ENCODE measurements at regions of chr22 and their contacts with region 1.

Region 1: GRCh38 chr22:35350539-35351503 is 30.1 kb upstream of the HMOX1 start:
- DNase-seq: peak; percentile 88 to 95 (median 91)
- ATAC-seq: peak; percentile 91 to 94 (median 93)
- H3K4me3 ChIP-seq: peak overlapping the region; percentile 10 to 60 (median 20)
- H3K27ac ChIP-seq: peak overlapping the region in 2 of 4 donors; percentile 44 to 50
- H3K4me1 ChIP-seq: peaks cover 0 to 12% (median 8%) of the 10 kb centered on the region in 3 donors
- H3K27me3 ChIP-seq: no peaks in the 10 kb centered on the region
- CTCF ChIP-seq: peak; percentile 85 to 92 (median 87)

Region 2: GRCh38 chr22:35582861-35583670 is 232.2 kb after region 1 on chr22:
- intact Hi-C with region 1: loop called in 2 of 3 experiments (anchors 5 to 10 kb)
- DNase-seq: peak in 4 of 6 donors; percentile 45 to 73 (median 54)
- ATAC-seq: peak; percentile 81 to 95 (median 90)
- H3K4me3 ChIP-seq: no peak overlapping the region
- H3K27ac ChIP-seq: no peak overlapping the region
- H3K4me1 ChIP-seq: no peaks in the 10 kb centered on the region
- H3K27me3 ChIP-seq: no peaks in the 10 kb centered on the region
- CTCF ChIP-seq: peak; percentile 77 to 92 (median 88)